Vagina (tissue), 2 donors: ENCODE measurements at regions of chr1 and their contacts with region 1.

Region 1: DNA sequence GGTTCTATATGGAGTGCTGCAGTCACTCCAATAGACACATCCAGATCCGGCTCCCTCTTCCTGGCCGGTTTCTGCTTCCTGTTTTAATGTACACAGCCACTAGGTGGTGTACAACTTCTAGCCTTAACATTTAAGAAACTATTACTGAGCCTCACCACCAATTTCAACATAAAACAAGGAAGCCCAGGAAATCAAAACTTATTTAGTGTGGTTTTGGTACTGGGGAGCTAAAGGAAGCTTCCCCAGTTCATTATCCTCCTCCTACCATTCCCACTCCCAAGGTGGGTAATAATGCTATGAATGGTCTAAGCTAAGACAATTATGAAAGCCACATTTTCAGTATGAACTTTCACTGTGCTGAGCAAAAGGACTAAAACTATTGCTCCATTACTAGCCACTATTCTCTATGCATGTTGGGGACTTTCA is 25.5 kb upstream of the MTMR11 start:
- DNase-seq: no peak
- H3K4me3 ChIP-seq: no peak overlapping the region
- H3K27ac ChIP-seq: peak overlapping the region; percentile 62
- H3K4me1 ChIP-seq: peaks cover 10% of the 10 kb centered on the region
- H3K27me3 ChIP-seq: no peaks in the 10 kb centered on the region
- CTCF ChIP-seq: peak; percentile 59 to 84 (median 63)
- POLR2A ChIP-seq: no peak

Region 2: GRCh38 chr1:150053926-150054325 is 91.8 kb after region 1 on chr1:
- intact Hi-C with region 1: loop called (anchors 5 kb)
- DNase-seq: no peak
- H3K4me3 ChIP-seq: no peak overlapping the region
- H3K27ac ChIP-seq: no peak overlapping the region
- H3K4me1 ChIP-seq: no peaks in the 10 kb centered on the region
- H3K27me3 ChIP-seq: no peaks in the 10 kb centered on the region
- CTCF ChIP-seq: no peak
- POLR2A ChIP-seq: no peak

Region 3: DNA sequence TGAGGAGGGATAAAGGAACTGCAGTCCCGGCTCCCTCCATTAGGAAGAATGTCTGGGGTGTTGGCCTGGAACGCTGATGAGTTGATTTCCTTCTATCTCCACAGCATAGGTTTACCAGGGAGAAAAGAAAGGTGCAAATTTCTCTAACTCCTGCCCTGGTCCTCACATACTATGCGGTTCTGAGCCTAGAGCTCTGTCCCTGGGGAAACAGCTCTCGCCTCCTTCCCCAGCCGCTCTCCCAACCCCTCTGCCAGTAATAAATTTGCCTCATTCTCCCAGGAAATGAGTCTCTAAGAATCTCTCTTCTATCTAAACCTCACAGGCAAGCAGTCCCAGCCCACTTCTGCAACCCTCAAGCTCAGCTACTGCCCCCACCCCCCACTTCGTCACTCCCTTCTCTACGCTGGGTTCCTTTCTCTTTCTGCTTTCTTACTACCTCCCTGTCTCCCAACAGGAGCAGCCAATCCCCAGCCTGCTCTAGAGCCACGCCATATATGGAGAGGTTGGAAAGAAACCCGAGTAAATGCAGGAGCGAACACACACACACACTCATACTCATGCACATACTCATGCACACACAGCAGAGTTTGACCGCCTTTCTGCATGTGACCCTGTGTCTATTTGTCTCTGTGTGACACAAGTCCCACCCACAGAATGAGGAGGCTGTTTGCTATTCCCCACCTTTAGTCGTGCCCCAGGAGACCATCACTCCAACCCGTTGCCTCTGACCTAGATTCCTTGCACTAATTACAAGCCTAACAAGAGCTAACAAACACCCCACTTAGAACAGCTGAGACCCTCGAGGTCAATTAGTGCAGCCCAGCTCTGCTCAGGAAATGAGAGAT is 200.9 kb after region 1 on chr1:
- intact Hi-C with region 1: loop called (anchors 10 kb)
- DNase-seq: peak in 1 of 2 donors; percentile 97
- H3K4me3 ChIP-seq: peak overlapping the region; percentile 35 to 40
- H3K27ac ChIP-seq: peak overlapping the region; percentile 95
- H3K4me1 ChIP-seq: peaks cover 50% of the 10 kb centered on the region
- H3K27me3 ChIP-seq: no peaks in the 10 kb centered on the region
- CTCF ChIP-seq: no peak
- POLR2A ChIP-seq: peak in 1 of 2 donors; percentile 52